Caco-2 (cell line): ENCODE measurements at regions of chr4 and their contacts with region 1.

Region 1: GRCh38 chr4:24594891-24595290 is 10.5 kb upstream of the DHX15 start:
- DNase-seq: peak in 1 of 2 experiments; percentile 66
- H3K4me3 ChIP-seq: no peak overlapping the region
- H3K4me3 Mint-ChIP-seq: peak overlapping the region; percentile 40
- H3K27ac Mint-ChIP-seq: peak overlapping the region; percentile 99
- H3K4me1 ChIP-seq: peaks cover 59% of the 10 kb centered on the region
- H3K4me1 Mint-ChIP-seq: peaks cover 38% of the 10 kb centered on the region
- H3K27me3 ChIP-seq: no peaks in the 10 kb centered on the region
- H3K27me3 Mint-ChIP-seq: no peaks in the 10 kb centered on the region
- CTCF ChIP-seq: no peak

Region 2: GRCh38 chr4:24631964-24632363 is 37.1 kb after region 1 on chr4:
- CTCF ChIA-PET with region 1: no interaction called
- POLR2A ChIA-PET with region 1: no interaction called
- intact Hi-C with region 1: loop called (anchors 2 kb)
- DNase-seq: peak in 1 of 2 experiments; percentile 34
- H3K4me3 ChIP-seq: no peak overlapping the region
- H3K4me3 Mint-ChIP-seq: no peak overlapping the region
- H3K27ac Mint-ChIP-seq: no peak overlapping the region
- H3K4me1 ChIP-seq: peaks cover 7% of the 10 kb centered on the region
- H3K4me1 Mint-ChIP-seq: no peaks in the 10 kb centered on the region
- H3K27me3 ChIP-seq: no peaks in the 10 kb centered on the region
- H3K27me3 Mint-ChIP-seq: no peaks in the 10 kb centered on the region
- CTCF ChIP-seq: no peak

Region 3: DNA sequence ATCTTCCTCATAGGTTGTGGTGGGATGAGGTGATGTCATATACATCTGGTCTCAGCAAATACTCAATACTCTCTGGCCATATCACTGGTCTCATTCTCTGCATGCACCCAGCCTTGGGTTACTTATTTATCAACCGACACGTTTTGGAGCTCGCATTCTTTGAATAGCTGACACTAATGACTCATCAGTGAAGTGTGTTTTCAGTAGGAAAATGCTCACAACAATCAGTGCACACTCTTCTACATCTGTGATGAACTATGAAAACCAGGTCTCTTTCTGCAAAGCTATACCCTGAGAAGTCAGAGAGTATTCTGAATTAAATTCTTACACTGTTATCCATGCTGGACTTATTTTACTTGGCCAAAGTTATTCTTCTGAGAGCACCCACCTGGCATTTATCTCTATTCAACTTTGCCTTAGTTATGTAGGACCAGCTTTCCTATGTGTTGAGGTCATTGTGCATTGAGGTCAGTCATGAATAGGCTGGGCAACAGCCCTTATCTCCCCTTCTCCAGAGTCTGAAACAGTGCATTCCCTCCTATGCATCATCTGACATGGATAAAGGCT is 48.2 kb after region 1 on chr4:
- CTCF ChIA-PET with region 1: interaction called, 4 read pairs
- POLR2A ChIA-PET with region 1: no interaction called
- intact Hi-C with region 1: loop called (anchors 1 kb)
- DNase-seq: peak; percentile 69 to 76
- H3K4me3 ChIP-seq: no peak overlapping the region
- H3K4me3 Mint-ChIP-seq: peak overlapping the region; percentile 39
- H3K27ac Mint-ChIP-seq: peak overlapping the region; percentile 69
- H3K4me1 ChIP-seq: peaks cover 24% of the 10 kb centered on the region
- H3K4me1 Mint-ChIP-seq: peaks cover 16% of the 10 kb centered on the region
- H3K27me3 ChIP-seq: no peaks in the 10 kb centered on the region
- H3K27me3 Mint-ChIP-seq: no peaks in the 10 kb centered on the region
- CTCF ChIP-seq: no peak

Region 4: GRCh38 chr4:24657768-24658617 is 63.1 kb after region 1 on chr4:
- CTCF ChIA-PET with region 1: no interaction called
- POLR2A ChIA-PET with region 1: no interaction called
- intact Hi-C with region 1: loop called (anchors 1 kb)
- DNase-seq: peak; percentile 15 to 40
- H3K4me3 ChIP-seq: no peak overlapping the region
- H3K4me3 Mint-ChIP-seq: no peak overlapping the region
- H3K27ac Mint-ChIP-seq: peak overlapping the region; percentile 40
- H3K4me1 ChIP-seq: peaks cover 36% of the 10 kb centered on the region
- H3K4me1 Mint-ChIP-seq: peaks cover 40% of the 10 kb centered on the region
- H3K27me3 ChIP-seq: no peaks in the 10 kb centered on the region
- H3K27me3 Mint-ChIP-seq: no peaks in the 10 kb centered on the region
- CTCF ChIP-seq: no peak

Region 5: GRCh38 chr4:24686871-24687680 is 92.2 kb after region 1 on chr4:
- CTCF ChIA-PET with region 1: interaction called, 4 read pairs
- POLR2A ChIA-PET with region 1: no interaction called
- intact Hi-C with region 1: loop called (anchors 1 kb)
- DNase-seq: peak; percentile 47 to 67
- H3K4me3 ChIP-seq: no peak overlapping the region
- H3K4me3 Mint-ChIP-seq: no peak overlapping the region
- H3K27ac Mint-ChIP-seq: no peak overlapping the region
- H3K4me1 ChIP-seq: peaks cover 6% of the 10 kb centered on the region
- H3K4me1 Mint-ChIP-seq: peaks cover 27% of the 10 kb centered on the region
- H3K27me3 ChIP-seq: no peaks in the 10 kb centered on the region
- H3K27me3 Mint-ChIP-seq: no peaks in the 10 kb centered on the region
- CTCF ChIP-seq: peak; percentile 44 to 74